ENCODE measurements at regions of chr14 and their contacts with region 1.

Region 1: GRCh38 chr14:100093319-100093718 is 28.1 kb downstream of the EVL start:
- DNase-seq: peak in 1 of 5 donors; percentile 64
- H3K4me3 ChIP-seq: no peak overlapping the region
- H3K4me3 Mint-ChIP-seq: peak overlapping the region in 2 of 7 donors; percentile 29 to 58
- H3K27ac ChIP-seq: no peak overlapping the region
- H3K27ac Mint-ChIP-seq: peak overlapping the region; percentile 41 to 95 (median 74)
- H3K4me1 ChIP-seq: peaks cover 98% of the 10 kb centered on the region
- H3K4me1 Mint-ChIP-seq: peaks cover 87 to 100% (median 100%) of the 10 kb centered on the region in 3 donors
- H3K27me3 ChIP-seq: no peaks in the 10 kb centered on the region
- H3K27me3 Mint-ChIP-seq: no peaks in the 10 kb centered on the region

Region 2: GRCh38 chr14:100078991-100079725 is 14.2 kb before region 1 on chr14:
- CTCF ChIA-PET with region 1: interaction called, 1,568 read pairs
- POLR2A ChIA-PET with region 1: interaction called, 10 read pairs
- DNase-seq: peak; percentile 81 to 93 (median 89)
- H3K4me3 ChIP-seq: peak overlapping the region; percentile 44
- H3K4me3 Mint-ChIP-seq: peak overlapping the region; percentile 70 to 88 (median 80)
- H3K27ac ChIP-seq: peak overlapping the region; percentile 58
- H3K27ac Mint-ChIP-seq: peak overlapping the region; percentile 85 to 98 (median 94)
- H3K4me1 ChIP-seq: peaks cover 96% of the 10 kb centered on the region
- H3K4me1 Mint-ChIP-seq: peaks cover 96 to 100% (median 99%) of the 10 kb centered on the region in 3 donors
- H3K27me3 ChIP-seq: no peaks in the 10 kb centered on the region
- H3K27me3 Mint-ChIP-seq: no peaks in the 10 kb centered on the region

Region 3: DNA sequence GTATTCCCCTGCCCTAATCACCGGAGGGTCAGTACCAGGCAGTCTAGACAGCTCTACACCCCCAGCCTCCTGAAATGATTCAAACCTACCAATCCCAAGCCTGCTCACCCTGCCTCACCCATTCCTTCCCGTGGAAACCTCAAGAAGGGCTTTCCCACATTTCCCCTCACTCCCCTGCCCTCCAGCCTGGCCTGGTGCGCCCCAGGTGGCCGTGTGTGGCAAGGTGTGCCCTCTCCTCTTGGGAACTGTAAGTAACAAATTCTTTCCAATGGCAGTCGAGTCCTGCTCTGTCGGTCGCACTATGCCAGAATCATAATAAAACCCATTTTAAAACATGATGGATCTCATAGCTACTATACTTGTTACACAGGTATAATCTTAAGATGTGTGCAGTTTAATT is 80.0 kb after region 1 on chr14:
- CTCF ChIA-PET with region 1: no interaction called
- POLR2A ChIA-PET with region 1: no interaction called
- DNase-seq: no peak
- H3K4me3 ChIP-seq: no peak overlapping the region
- H3K4me3 Mint-ChIP-seq: no peak overlapping the region
- H3K27ac ChIP-seq: no peak overlapping the region
- H3K27ac Mint-ChIP-seq: peak overlapping the region in 1 of 8 donors; percentile 61
- H3K4me1 ChIP-seq: no peaks in the 10 kb centered on the region
- H3K4me1 Mint-ChIP-seq: peaks cover 2 to 5% (median 4%) of the 10 kb centered on the region in 3 donors
- H3K27me3 ChIP-seq: no peaks in the 10 kb centered on the region
- H3K27me3 Mint-ChIP-seq: peaks cover 13 to 23% of the 10 kb centered on the region in 2 donors